ENCODE measurements at regions of chr6 and their contacts with region 1.

Region 1: GRCh38 chr6:10403385-10404106 is 11.3 kb downstream of the TFAP2A start:
- DNase-seq: no peak
- H3K4me3 ChIP-seq: peak overlapping the region; percentile 34 to 60 (median 44); a peak in 6 of 8 replicates
- H3K27ac ChIP-seq: no peak overlapping the region
- H3K4me1 ChIP-seq: peaks cover 2 to 17% (median 12%) of the 10 kb centered on the region in 4 experiments
- H3K27me3 ChIP-seq: peaks cover 61 to 92% (median 79%) of the 10 kb centered on the region in 4 experiments
- CTCF ChIP-seq: no peak
- EP300 ChIP-seq: no peak
- POLR2A ChIP-seq: no peak
- RAD21 ChIP-seq: no peak

Region 2: GRCh38 chr6:10381133-10381829 is 22.3 kb before region 1 on chr6:
- CTCF ChIA-PET with region 1: interaction called, 365 read pairs
- POLR2A ChIA-PET with region 1: interaction called, 4 read pairs
- DNase-seq: peak in 1 of 2 experiments; percentile 81
- H3K4me3 ChIP-seq: peak overlapping the region in 3 of 4 experiments; percentile 9 to 46 (median 26); a peak in 5 of 8 replicates
- H3K27ac ChIP-seq: no peak overlapping the region
- H3K4me1 ChIP-seq: peaks cover 8 to 32% (median 19%) of the 10 kb centered on the region in 4 experiments
- H3K27me3 ChIP-seq: peaks cover 55 to 69% (median 63%) of the 10 kb centered on the region in 4 experiments
- CTCF ChIP-seq: peak; percentile 26 to 72 (median 38)
- EP300 ChIP-seq: peak in 1 of 2 experiments; percentile 32; a peak in 1 of 3 replicates
- POLR2A ChIP-seq: no peak
- RAD21 ChIP-seq: peak; percentile 68 to 79

Region 3: GRCh38 chr6:11009353-11009752 is 605.8 kb after region 1 on chr6:
- CTCF ChIA-PET with region 1: no interaction called
- POLR2A ChIA-PET with region 1: no interaction called
- DNase-seq: no peak
- H3K4me3 ChIP-seq: no peak overlapping the region
- H3K27ac ChIP-seq: no peak overlapping the region
- H3K4me1 ChIP-seq: peaks cover 0 to 11% (median under 1%) of the 10 kb centered on the region in 4 experiments; a peak in 5 of 7 replicates
- H3K27me3 ChIP-seq: no peaks in the 10 kb centered on the region
- CTCF ChIP-seq: no peak
- EP300 ChIP-seq: no peak
- POLR2A ChIP-seq: no peak
- RAD21 ChIP-seq: no peak

Measured in H1 (cell line).